BJ (cell line): ENCODE measurements at regions of chr6 and their contacts with region 1.

Region 1: GRCh38 chr6:158686791-158687381 is 37.0 kb downstream of the SYTL3 start:
- DNase-seq: no peak
- H3K4me3 ChIP-seq: no peak overlapping the region
- H3K27me3 ChIP-seq: no peaks in the 10 kb centered on the region
- CTCF ChIP-seq: no peak

Region 2: GRCh38 chr6:158213925-158214674 is 472.8 kb before region 1 on chr6:
- CTCF ChIA-PET with region 1: interaction called, 33 read pairs
- POLR2A ChIA-PET with region 1: no interaction called
- DNase-seq: no peak
- H3K4me3 ChIP-seq: no peak overlapping the region
- H3K27me3 ChIP-seq: no peaks in the 10 kb centered on the region
- CTCF ChIP-seq: peak; percentile 75

Region 3: DNA sequence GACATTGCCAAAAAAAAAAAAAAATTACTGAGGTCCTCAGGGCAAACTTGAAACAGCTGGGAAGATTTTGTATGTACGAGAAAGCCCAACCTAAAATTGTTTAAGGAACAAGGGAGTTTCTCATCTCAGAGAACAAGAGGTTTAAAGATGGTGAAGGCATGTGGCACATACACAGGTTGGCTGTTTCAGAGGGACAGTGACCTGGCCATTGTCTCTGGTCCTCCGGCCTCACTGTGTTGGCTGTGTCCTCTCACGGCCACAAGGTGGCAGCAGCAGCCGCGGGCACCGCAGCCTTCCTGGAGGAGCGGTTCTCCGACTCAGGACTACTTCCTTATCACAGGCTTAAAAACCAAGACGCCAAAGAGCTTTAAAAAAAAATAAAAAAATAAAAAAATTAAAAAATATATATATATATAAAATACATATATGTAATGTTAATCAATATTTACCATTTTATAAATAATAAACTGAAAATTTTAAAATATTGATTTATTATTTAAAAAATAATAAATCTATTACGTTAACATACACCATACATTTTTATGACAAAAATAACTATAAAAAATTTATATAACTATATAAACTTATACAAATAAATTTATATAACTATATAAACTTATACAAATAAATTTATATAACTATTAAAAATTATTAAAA is 466.0 kb before region 1 on chr6:
- CTCF ChIA-PET with region 1: interaction called, 20 read pairs
- POLR2A ChIA-PET with region 1: no interaction called
- DNase-seq: no peak
- H3K4me3 ChIP-seq: no peak overlapping the region
- H3K27me3 ChIP-seq: no peaks in the 10 kb centered on the region
- CTCF ChIP-seq: peak; percentile 90

Region 4: DNA sequence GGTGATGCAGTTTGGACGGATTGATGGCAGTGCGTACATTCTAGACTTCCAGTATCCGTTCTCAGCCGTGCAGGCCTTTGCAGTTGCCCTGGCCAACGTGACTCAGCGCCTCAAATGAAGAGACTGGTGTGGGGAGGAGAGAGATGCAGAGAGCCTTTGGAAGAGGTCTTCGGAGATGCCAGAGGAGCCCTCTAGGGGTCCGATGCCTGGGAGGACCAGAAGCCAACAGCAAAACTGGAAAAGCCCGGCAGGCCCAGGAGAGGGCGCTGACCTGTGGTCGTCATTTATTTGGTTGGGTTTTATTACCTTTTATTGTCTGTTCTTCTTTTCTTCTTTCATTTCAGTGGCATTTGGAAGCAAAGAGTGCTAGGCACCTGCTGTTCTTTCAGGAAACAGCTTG is 180.3 kb before region 1 on chr6:
- CTCF ChIA-PET with region 1: no interaction called
- POLR2A ChIA-PET with region 1: no interaction called
- DNase-seq: no peak
- H3K4me3 ChIP-seq: no peak overlapping the region
- H3K27me3 ChIP-seq: no peaks in the 10 kb centered on the region
- CTCF ChIP-seq: no peak

Region 5: GRCh38 chr6:158605266-158605878 is 81.5 kb before region 1 on chr6:
- CTCF ChIA-PET with region 1: interaction called, 17 read pairs
- POLR2A ChIA-PET with region 1: no interaction called
- DNase-seq: peak; percentile 22
- H3K4me3 ChIP-seq: no peak overlapping the region
- H3K27me3 ChIP-seq: no peaks in the 10 kb centered on the region
- CTCF ChIP-seq: peak; percentile 78

Region 6: GRCh38 chr6:158644231-158645063 is 42.4 kb before region 1 on chr6 and contains the start of gene DYNLT1:
- CTCF ChIA-PET with region 1: interaction called, 19 read pairs
- POLR2A ChIA-PET with region 1: no interaction called
- DNase-seq: peak; percentile 60
- H3K4me3 ChIP-seq: peak within 1 kb of the TSS; percentile 92
- H3K27me3 ChIP-seq: no peaks in the 10 kb centered on the region
- CTCF ChIP-seq: no peak
- polyA plus RNA-seq, gene DYNLT1: 175 and 265 TPM in 2 replicates

Region 7: DNA sequence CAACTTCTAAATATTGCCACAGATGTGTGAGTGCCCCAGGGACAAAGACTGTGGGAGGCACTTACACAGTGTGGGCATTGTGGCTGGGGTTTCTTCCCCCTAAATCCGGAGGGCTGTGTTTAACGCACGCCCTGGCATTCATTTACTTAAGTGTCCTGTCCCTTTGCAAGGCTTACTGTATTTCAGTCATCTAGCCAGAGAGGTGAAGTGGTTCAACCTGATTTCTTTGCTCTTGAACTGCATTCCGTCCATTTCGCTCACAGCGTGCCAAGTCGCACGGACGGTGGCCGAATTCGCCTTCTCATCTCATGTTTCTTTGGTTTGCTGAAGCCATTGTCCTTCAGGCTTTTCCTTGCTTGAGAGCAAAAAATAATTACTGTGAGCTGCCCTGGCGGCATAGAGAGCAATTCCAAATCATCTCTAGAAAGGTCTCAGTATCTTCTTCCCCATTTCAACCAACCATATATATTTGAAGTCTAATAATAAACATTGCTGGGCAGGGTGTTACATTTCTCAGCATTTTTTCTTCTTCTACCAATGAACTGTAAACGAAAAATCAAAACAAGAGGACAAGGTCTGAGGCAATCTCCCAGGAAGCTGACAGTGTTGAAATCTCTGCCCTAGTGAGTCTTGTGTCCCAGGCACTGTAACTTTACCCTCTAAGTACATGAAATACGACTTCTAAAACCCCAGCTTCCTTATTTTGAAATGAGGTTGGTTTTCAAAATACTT is 20.1 kb before region 1 on chr6:
- CTCF ChIA-PET with region 1: interaction called, 14 read pairs
- POLR2A ChIA-PET with region 1: no interaction called
- DNase-seq: no peak
- H3K4me3 ChIP-seq: no peak overlapping the region
- H3K27me3 ChIP-seq: no peaks in the 10 kb centered on the region
- CTCF ChIP-seq: no peak

Region 8: GRCh38 chr6:158849899-158850806 is 163.3 kb after region 1 on chr6:
- CTCF ChIA-PET with region 1: no interaction called
- POLR2A ChIA-PET with region 1: no interaction called
- DNase-seq: peak; percentile 70
- H3K4me3 ChIP-seq: no peak overlapping the region
- H3K27me3 ChIP-seq: no peaks in the 10 kb centered on the region
- CTCF ChIP-seq: no peak